PC-3 (cell line): ENCODE measurements at regions of chr1 and their contacts with region 1.

Region 1: DNA sequence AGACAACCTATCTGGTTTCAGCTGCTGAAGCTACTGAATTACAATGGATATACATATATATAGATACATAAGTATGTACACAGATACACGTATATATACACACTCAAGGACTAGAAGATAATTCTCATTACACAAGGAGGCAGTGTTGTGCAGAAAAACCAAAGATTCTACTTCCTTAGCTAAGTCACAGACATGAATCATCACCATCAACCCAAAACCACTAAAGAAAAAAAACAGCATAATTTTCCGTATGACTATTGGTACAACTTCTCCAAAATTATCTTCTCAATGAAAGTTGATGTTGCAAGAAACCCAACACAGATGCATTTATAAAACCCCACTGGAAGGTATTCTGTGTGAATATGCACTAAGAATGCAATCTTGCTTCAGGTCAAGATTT is 36.8 kb upstream of the RPF1 start:
- DNase-seq: peak; percentile 93
- ATAC-seq: peak; percentile 93
- H3K4me3 ChIP-seq: no peak overlapping the region
- H3K27ac ChIP-seq: peak overlapping the region; percentile 57
- H3K4me1 ChIP-seq: peaks cover 12% of the 10 kb centered on the region
- H3K27me3 ChIP-seq: no peaks in the 10 kb centered on the region
- CTCF ChIP-seq: peak; percentile 84

Region 2: DNA sequence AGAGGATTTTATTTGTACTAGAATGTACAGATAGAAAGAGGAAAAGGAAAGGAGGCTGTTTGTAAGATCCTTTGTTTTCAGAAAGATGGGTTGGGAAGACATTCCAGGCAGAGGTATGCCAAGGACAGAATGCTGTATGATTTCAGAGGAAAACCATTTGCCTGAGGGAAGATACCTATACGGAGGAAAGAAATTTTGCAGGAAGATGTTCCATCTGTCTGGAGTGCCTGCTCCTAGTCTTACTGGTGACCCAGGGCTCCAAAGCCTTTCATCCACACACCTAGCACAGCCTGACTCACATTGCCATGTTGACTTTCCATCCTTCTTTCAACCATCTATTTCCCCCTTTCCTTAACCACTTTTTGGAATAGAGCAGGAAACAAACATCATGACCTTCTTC is 122.6 kb before region 1 on chr1:
- CTCF ChIA-PET with region 1: no interaction called
- POLR2A ChIA-PET with region 1: no interaction called
- intact Hi-C with region 1: no loop called
- DNase-seq: peak; percentile 70
- ATAC-seq: peak; percentile 73
- H3K4me3 ChIP-seq: no peak overlapping the region
- H3K27ac ChIP-seq: no peak overlapping the region
- H3K4me1 ChIP-seq: peaks cover 9% of the 10 kb centered on the region
- H3K27me3 ChIP-seq: no peaks in the 10 kb centered on the region
- CTCF ChIP-seq: no peak

Region 3: DNA sequence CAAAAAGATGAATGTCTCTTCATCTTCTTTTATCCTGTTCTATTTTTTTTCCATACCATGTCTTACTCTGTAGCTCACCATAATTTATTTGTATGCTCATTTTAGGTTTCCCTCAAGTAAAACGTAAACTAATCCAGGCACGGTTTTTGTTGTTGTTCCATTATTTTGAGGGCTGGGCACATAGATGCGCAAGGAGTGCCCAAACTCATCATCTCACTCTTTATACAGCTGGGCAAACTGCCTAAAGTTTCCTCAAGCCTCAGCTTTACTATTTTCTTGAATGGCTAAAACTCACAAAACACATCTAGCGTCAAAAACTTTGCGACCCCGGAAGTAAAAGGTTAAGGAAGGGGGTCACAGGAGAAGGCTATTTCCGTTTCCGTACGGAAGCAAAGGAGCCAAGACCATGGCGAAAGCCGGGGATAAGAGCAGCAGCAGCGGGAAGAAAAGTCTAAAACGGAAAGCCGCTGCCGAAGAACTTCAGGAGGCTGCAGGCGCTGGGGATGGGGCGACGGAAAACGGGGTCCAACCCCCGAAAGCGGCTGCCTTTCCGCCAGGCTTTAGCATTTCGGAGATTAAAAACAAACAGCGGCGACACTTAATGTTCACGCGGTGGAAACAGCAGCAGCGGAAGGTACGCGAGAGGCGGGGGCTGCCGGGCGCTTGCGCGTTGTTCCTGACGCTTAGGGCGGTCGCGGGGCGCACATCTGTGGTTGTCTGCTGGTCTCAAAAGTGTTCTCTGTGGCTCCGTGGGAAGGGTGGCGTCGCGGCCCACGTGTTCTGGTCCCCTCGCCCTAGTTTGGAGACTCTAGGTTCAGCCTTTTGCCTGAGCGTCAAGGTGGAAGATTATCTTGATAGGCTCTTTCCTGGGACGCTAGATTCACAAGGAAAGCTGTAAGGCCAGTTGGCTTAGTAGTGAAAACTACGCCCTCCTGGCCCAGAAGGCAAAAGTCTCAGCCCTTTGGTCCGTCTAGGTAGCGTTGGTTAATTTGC is 36.9 kb after region 1 on chr1 and contains the start of gene RPF1:
- CTCF ChIA-PET with region 1: interaction called, 4 read pairs
- POLR2A ChIA-PET with region 1: interaction called, 4 read pairs
- intact Hi-C with region 1: loop called (anchors 5 kb)
- DNase-seq: peak; percentile 79
- ATAC-seq: peak; percentile 96
- H3K4me3 ChIP-seq: peak within 1 kb of the TSS; percentile 84
- H3K27ac ChIP-seq: peak within 1 kb of the TSS; percentile 52
- H3K4me1 ChIP-seq: peaks cover 30% of the 10 kb centered on the region
- H3K27me3 ChIP-seq: no peaks in the 10 kb centered on the region
- CTCF ChIP-seq: no peak
- total RNA-seq, gene RPF1: 83.0 and 85.8 TPM in 2 replicates

Region 4: GRCh38 chr1:84541679-84542078 is 99.4 kb after region 1 on chr1:
- CTCF ChIA-PET with region 1: interaction called, 4 read pairs
- POLR2A ChIA-PET with region 1: no interaction called
- intact Hi-C with region 1: loop called (anchors 1 kb)
- DNase-seq: peak; percentile 14
- ATAC-seq: no peak
- H3K4me3 ChIP-seq: no peak overlapping the region
- H3K27ac ChIP-seq: no peak overlapping the region
- H3K4me1 ChIP-seq: peaks cover 16% of the 10 kb centered on the region
- H3K27me3 ChIP-seq: no peaks in the 10 kb centered on the region
- CTCF ChIP-seq: peak; percentile 65

Region 5: GRCh38 chr1:84620720-84621313 is 178.6 kb after region 1 on chr1:
- CTCF ChIA-PET with region 1: no interaction called
- POLR2A ChIA-PET with region 1: no interaction called
- intact Hi-C with region 1: loop called (anchors 1 kb)
- DNase-seq: peak; percentile 84
- ATAC-seq: peak; percentile 83
- H3K4me3 ChIP-seq: peak overlapping the region; percentile 81
- H3K27ac ChIP-seq: peak overlapping the region; percentile 84
- H3K4me1 ChIP-seq: peaks cover 24% of the 10 kb centered on the region
- H3K27me3 ChIP-seq: no peaks in the 10 kb centered on the region
- CTCF ChIP-seq: peak; percentile 98

Region 6: GRCh38 chr1:84724128-84724860 is 282.0 kb after region 1 on chr1:
- CTCF ChIA-PET with region 1: no interaction called
- POLR2A ChIA-PET with region 1: no interaction called
- intact Hi-C with region 1: no loop called
- DNase-seq: no peak
- ATAC-seq: no peak
- H3K4me3 ChIP-seq: no peak overlapping the region
- H3K27ac ChIP-seq: no peak overlapping the region
- H3K4me1 ChIP-seq: peaks cover 15% of the 10 kb centered on the region
- H3K27me3 ChIP-seq: no peaks in the 10 kb centered on the region
- CTCF ChIP-seq: peak; percentile 64

Region 7: GRCh38 chr1:84772428-84772943 is 330.2 kb after region 1 on chr1:
- CTCF ChIA-PET with region 1: no interaction called
- POLR2A ChIA-PET with region 1: no interaction called
- intact Hi-C with region 1: loop called (anchors 1 kb)
- DNase-seq: peak; percentile 92
- ATAC-seq: peak; percentile 31
- H3K4me3 ChIP-seq: no peak overlapping the region
- H3K27ac ChIP-seq: peak overlapping the region; percentile 99
- H3K4me1 ChIP-seq: peaks cover 49% of the 10 kb centered on the region
- H3K27me3 ChIP-seq: no peaks in the 10 kb centered on the region
- CTCF ChIP-seq: peak; percentile 93